Activated B cell treated with CpG ODN at 0.5 μM for 24 hours (primary cell): ENCODE measurements at regions of chr13 and their contacts with region 1.

Region 1: DNA sequence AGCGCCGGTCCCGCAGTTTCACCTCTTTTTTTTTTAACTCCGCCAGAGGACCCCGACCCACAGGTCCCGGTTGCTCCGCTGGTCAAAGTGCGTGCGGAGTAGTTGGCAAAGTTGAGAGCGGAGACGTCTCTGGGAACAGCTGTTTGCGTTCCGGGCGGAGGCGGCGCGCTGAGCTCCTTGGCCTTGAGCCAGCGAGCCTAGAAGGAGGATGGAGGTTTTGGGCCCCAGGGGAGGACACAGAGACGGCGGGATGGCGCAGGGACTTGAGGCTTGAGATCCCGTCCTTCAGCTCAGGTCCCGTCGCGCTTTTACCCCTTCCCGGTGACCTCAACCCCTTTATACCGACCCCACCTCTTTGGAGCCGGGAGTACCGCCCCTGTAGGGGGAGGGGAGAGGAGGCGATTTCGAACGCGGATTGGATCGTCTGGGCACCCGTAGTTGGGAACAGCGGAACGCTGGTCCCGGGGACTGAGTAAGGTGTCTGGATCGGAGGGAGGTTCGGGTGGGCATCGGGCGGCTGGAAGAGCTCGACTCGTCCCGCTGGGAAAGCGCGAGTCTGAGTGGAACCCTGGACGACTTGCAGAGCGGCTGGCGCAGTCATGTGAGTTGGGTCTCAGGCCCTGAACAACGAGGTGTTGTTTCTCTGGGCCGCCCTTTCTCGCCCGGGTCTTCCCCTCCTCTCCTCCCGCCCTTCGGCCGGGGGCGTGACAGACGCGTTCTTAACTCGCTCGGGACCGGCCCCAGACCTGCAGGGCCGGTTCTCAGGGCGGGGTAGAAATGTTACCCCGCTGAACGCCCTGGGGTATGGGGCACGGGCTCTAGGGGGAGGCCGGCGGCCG is at the start of gene WBP4:
- DNase-seq: peak; percentile 91
- ATAC-seq: peak; percentile 75
- H3K4me3 Mint-ChIP-seq: peak within 1 kb of the TSS; percentile 100
- H3K27ac Mint-ChIP-seq: peak within 1 kb of the TSS; percentile 100
- H3K4me1 Mint-ChIP-seq: peaks cover 39% of the 10 kb centered on the region
- H3K27me3 Mint-ChIP-seq: peaks cover 2% of the 10 kb centered on the region
- CTCF ChIP-seq: no peak
- total RNA-seq, gene WBP4: 8.6 and 9.0 TPM in 2 replicates

Region 2: DNA sequence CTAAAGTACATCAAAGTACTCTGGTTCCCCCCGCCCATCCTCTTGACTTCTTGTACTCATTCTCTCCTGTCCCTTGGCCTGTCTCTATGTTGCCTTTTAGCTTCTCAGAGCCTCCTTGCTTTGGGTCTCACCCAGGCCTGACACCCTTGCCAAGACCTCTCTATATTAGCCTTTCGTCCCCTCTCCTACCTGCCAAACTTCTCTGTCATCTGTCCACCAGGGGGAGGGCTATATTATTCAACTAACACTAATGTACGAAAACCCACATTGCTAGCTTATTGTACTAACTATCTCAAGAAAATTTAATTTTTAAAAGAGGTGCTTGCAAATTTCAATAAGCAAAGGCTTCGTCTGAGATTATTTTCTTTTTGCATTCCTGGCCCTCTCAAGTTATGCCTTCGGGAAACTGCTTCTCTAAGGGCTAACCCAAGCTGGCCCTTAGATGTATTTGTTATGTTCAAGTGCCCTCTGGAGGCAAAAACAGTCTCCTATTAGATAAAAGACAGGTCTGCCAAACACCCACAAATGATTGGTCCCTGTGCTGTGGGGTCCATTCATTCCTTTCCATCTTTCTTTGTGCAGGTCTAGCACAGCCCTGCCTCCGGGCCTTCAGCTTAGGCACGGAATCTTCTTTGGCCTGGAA is 284.0 kb before region 1 on chr13:
- CTCF ChIA-PET with region 1: no interaction called
- POLR2A ChIA-PET with region 1: no interaction called
- intact Hi-C with region 1: loop called (anchors 2 kb)
- DNase-seq: no peak
- ATAC-seq: peak; percentile 85
- H3K4me3 Mint-ChIP-seq: peak overlapping the region; percentile 70
- H3K27ac Mint-ChIP-seq: peak overlapping the region; percentile 91
- H3K4me1 Mint-ChIP-seq: peaks cover 25% of the 10 kb centered on the region
- H3K27me3 Mint-ChIP-seq: no peaks in the 10 kb centered on the region
- CTCF ChIP-seq: peak; percentile 91

Region 3: DNA sequence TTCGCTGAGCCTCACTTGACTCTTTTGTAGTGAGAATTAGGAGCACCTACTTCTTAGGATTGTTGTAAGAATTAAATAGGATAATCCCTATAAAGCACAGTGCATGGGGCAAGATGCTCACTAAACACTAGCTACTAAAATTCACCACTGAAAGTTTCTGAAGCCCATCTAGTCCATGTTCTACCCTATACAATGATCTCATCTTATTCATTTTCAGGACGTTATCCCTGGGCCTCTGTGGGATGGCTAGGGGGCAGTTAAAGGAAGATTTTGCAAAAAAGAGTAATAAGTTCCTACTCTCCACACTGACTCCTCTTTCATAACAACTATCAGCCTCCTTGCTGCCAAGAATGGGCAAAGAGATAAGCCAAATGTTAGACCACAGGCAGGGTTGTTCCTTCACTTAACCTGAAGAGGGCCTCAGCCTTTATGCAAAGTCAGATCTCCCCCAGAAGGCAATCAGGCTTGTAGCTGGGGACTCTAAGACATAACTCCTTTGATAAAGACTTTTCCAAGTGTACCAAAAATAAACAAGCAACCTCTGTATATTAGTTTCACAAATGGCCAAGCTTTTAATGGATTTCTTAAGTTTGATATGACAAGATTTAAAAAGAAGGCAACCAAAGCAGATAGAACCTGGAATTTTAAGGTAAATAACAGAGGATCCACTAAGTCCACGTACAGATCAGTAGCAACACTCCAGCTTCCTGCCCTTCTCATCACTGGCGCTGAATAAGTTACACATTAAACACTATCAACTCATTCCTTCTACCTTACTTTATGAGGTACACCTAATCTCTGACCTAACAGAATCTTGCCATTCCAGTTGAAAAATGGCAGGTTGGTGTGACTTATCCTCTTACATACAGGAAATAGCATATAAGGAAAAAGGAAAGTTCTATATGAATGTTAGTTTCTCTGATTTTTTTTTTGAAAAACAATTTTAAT is 86.6 kb before region 1 on chr13:
- CTCF ChIA-PET with region 1: interaction called, 16 read pairs
- POLR2A ChIA-PET with region 1: interaction called, 8 read pairs
- intact Hi-C with region 1: loop called (anchors 1 kb)
- DNase-seq: no peak
- ATAC-seq: peak; percentile 89
- H3K4me3 Mint-ChIP-seq: peak overlapping the region; percentile 72
- H3K27ac Mint-ChIP-seq: peak overlapping the region; percentile 59
- H3K4me1 Mint-ChIP-seq: peaks cover 97% of the 10 kb centered on the region
- H3K27me3 Mint-ChIP-seq: no peaks in the 10 kb centered on the region
- CTCF ChIP-seq: no peak

Region 4: GRCh38 chr13:41075034-41075433 is 13.7 kb after region 1 on chr13:
- CTCF ChIA-PET with region 1: no interaction called
- POLR2A ChIA-PET with region 1: interaction called, 10 read pairs
- intact Hi-C with region 1: no loop called
- DNase-seq: no peak
- ATAC-seq: peak; percentile 58
- H3K4me3 Mint-ChIP-seq: no peak overlapping the region
- H3K27ac Mint-ChIP-seq: no peak overlapping the region
- H3K4me1 Mint-ChIP-seq: no peaks in the 10 kb centered on the region
- H3K27me3 Mint-ChIP-seq: no peaks in the 10 kb centered on the region
- CTCF ChIP-seq: no peak

Region 5: DNA sequence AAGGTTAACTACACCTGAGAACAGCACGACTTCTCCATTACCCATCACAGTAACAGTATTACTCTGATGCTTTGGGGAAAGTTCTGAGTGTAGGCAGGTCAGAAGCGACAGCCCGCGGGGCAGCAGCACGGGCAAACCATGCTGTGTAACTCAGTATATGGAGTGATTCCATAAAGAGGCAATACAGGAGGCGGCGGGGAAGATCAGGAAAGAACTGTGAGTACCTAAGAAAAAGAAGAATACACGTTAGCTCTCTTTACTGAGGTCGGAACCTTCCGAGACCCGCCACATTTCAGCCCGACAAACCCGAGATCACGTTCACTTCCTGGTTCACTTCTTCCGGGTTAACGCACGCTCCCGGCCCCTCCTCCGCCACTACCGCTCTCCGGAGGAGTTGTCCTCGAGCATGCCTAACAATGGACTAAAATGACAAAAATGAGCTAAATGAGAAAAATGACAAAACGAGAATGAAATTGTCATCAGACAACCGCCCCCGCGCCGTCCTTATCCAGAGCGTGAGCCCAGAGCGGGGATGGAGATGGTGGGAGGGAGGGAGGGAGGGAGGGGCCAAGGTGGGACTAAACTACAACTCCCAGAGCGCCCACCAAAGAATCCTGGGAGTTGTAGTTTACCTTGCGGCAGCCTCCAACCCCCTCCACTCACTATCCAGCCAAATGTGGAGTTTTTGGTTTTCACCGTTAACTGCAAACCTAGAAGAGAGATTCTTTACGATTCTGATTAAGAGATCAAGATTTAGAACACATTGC is 202.2 kb after region 1 on chr13 and contains the start of gene MTRF1:
- CTCF ChIA-PET with region 1: no interaction called
- POLR2A ChIA-PET with region 1: interaction called, 6 read pairs
- intact Hi-C with region 1: loop called (anchors 1 kb)
- DNase-seq: peak; percentile 72
- ATAC-seq: peak; percentile 93
- H3K4me3 Mint-ChIP-seq: peak within 1 kb of the TSS; percentile 96
- H3K27ac Mint-ChIP-seq: peak within 1 kb of the TSS; percentile 99
- H3K4me1 Mint-ChIP-seq: peaks cover 17% of the 10 kb centered on the region
- H3K27me3 Mint-ChIP-seq: no peaks in the 10 kb centered on the region
- CTCF ChIP-seq: no peak
- total RNA-seq, gene MTRF1: 22.2 and 26.7 TPM in 2 replicates

Region 6: GRCh38 chr13:41622432-41623429 is 561.4 kb after region 1 on chr13:
- CTCF ChIA-PET with region 1: no interaction called
- POLR2A ChIA-PET with region 1: no interaction called
- intact Hi-C with region 1: no loop called
- DNase-seq: no peak
- ATAC-seq: no peak
- H3K4me3 Mint-ChIP-seq: no peak overlapping the region
- H3K27ac Mint-ChIP-seq: no peak overlapping the region
- H3K4me1 Mint-ChIP-seq: no peaks in the 10 kb centered on the region
- H3K27me3 Mint-ChIP-seq: no peaks in the 10 kb centered on the region
- CTCF ChIP-seq: no peak

Region 7: GRCh38 chr13:42377640-42378382 is 1316.5 kb after region 1 on chr13:
- CTCF ChIA-PET with region 1: no interaction called
- POLR2A ChIA-PET with region 1: no interaction called
- intact Hi-C with region 1: loop called (anchors 5 kb)
- DNase-seq: no peak
- ATAC-seq: peak; percentile 74
- H3K4me3 Mint-ChIP-seq: peak overlapping the region; percentile 60
- H3K27ac Mint-ChIP-seq: peak overlapping the region; percentile 91
- H3K4me1 Mint-ChIP-seq: peaks cover 54% of the 10 kb centered on the region
- H3K27me3 Mint-ChIP-seq: no peaks in the 10 kb centered on the region
- CTCF ChIP-seq: no peak